ENCODE measurements at regions of chr21 and their contacts with region 1.

Region 1: GRCh38 chr21:33374450-33375096 is 28.6 kb upstream of the IFNGR2 start:
- DNase-seq: peak; percentile 75
- H3K4me3 ChIP-seq: no peak overlapping the region
- H3K27ac ChIP-seq: peak overlapping the region; percentile 31
- H3K4me1 ChIP-seq: no peaks in the 10 kb centered on the region
- H3K27me3 ChIP-seq: no peaks in the 10 kb centered on the region
- CTCF ChIP-seq: peak; percentile 63

Region 2: GRCh38 chr21:33441489-33442477 is 67.2 kb after region 1 on chr21:
- intact Hi-C with region 1: loop called (anchors 10 kb)
- DNase-seq: peak; percentile 67
- H3K4me3 ChIP-seq: no peak overlapping the region
- H3K27ac ChIP-seq: peak overlapping the region; percentile 23
- H3K4me1 ChIP-seq: no peaks in the 10 kb centered on the region
- H3K27me3 ChIP-seq: no peaks in the 10 kb centered on the region
- CTCF ChIP-seq: no peak